ENCODE measurements at regions of chr12 and their contacts with region 1.

Region 1: GRCh38 chr12:12907552-12907951 is 16.2 kb downstream of the GPRC5A start:
- DNase-seq: no peak
- H3K4me3 Mint-ChIP-seq: peak overlapping the region; percentile 62
- H3K27ac Mint-ChIP-seq: peak overlapping the region; percentile 66
- H3K4me1 Mint-ChIP-seq: peaks cover 85% of the 10 kb centered on the region
- H3K27me3 Mint-ChIP-seq: no peaks in the 10 kb centered on the region
- CTCF ChIP-seq: no peak

Region 2: DNA sequence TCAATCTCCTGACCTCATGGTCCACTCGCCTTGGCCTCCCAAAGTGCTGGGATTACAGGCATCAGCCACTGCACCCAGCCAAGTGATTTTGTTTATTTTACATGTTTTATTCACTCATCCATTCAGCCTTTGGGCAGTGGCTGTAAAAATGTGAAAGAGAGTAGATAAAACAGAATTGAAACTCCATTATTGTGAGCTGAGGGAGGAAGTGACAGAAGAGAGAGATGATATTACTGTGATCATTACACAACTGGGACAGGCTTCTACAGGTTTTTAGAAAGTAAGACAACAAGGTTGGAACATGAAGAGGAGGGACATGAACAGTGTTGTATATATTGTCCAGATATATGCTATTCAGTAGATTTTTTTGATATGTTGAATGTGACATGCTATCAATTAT is 270.9 kb before region 1 on chr12:
- CTCF ChIA-PET with region 1: no interaction called
- intact Hi-C with region 1: no loop called
- DNase-seq: no peak
- H3K4me3 Mint-ChIP-seq: no peak overlapping the region
- H3K27ac Mint-ChIP-seq: no peak overlapping the region
- H3K4me1 Mint-ChIP-seq: no peaks in the 10 kb centered on the region
- H3K27me3 Mint-ChIP-seq: no peaks in the 10 kb centered on the region
- CTCF ChIP-seq: no peak

Region 3: DNA sequence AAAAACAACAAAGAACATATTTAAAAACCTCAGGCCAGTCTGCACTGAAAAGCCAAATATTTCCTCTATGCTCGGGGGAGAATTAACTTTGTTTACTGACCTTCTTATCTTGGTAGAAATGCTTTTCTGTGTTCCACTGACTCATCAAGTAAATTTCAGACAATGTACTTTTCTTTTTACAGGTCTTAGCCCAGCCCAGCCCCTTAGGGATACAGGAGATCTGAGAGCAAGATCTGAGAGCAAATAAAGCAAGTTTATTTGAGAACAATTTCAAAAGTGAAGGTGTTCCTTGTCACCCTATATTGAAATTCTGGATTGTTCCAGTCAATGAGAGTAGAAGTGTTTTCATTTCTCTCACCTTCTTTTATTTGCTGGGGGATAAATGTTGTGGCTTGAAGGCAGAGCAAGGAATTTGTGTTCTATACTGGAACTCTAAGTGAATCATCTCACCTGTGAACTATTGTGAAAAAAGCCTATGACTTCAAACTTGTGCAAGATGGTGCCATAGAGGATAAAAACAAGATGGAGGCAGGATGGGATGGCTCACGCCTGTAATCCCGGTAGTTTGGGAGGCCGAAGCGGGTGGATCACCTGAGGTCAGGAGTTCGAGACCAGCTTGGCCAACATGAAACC is 24.1 kb before region 1 on chr12:
- CTCF ChIA-PET with region 1: no interaction called
- intact Hi-C with region 1: loop called (anchors 1 kb)
- DNase-seq: no peak
- H3K4me3 Mint-ChIP-seq: peak overlapping the region; percentile 65
- H3K27ac Mint-ChIP-seq: peak overlapping the region; percentile 92
- H3K4me1 Mint-ChIP-seq: peaks cover 91% of the 10 kb centered on the region
- H3K27me3 Mint-ChIP-seq: no peaks in the 10 kb centered on the region
- CTCF ChIP-seq: no peak

Measured in Calu3 (cell line).